ENCODE measurements at regions of chrX and their contacts with region 1.

Region 1: DNA sequence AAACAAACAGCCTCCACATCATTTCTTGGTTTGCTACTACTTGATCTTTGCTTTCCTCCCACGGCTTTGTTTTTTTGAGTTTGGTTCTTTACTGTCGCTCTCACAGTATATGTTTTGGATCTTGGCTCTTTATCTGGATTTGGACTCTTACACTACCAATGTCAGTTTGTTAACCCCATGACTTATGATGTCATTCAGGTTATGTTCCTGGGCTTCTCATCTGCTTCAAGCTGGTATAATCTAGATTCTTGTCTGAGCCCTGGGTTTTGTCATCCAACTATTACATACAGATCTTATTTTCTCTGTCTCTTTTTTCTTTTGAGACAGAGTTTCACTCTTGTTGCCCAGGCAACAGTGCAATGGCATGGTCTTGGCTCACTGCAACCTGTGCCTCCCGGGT is 482.9 kb upstream of the TEX13C start:
- DNase-seq: peak; percentile 3
- H3K4me3 Mint-ChIP-seq: peak overlapping the region; percentile 8
- H3K27ac Mint-ChIP-seq: no peak overlapping the region
- H3K4me1 Mint-ChIP-seq: peaks cover 5% of the 10 kb centered on the region
- H3K27me3 Mint-ChIP-seq: no peaks in the 10 kb centered on the region

Region 2: GRCh38 chrX:124435616-124436015 is 401.2 kb before region 1 on chrX:
- CTCF ChIA-PET with region 1: no interaction called
- intact Hi-C with region 1: no loop called
- DNase-seq: no peak
- H3K4me3 Mint-ChIP-seq: no peak overlapping the region
- H3K27ac Mint-ChIP-seq: no peak overlapping the region
- H3K4me1 Mint-ChIP-seq: no peaks in the 10 kb centered on the region
- H3K27me3 Mint-ChIP-seq: no peaks in the 10 kb centered on the region

Region 3: DNA sequence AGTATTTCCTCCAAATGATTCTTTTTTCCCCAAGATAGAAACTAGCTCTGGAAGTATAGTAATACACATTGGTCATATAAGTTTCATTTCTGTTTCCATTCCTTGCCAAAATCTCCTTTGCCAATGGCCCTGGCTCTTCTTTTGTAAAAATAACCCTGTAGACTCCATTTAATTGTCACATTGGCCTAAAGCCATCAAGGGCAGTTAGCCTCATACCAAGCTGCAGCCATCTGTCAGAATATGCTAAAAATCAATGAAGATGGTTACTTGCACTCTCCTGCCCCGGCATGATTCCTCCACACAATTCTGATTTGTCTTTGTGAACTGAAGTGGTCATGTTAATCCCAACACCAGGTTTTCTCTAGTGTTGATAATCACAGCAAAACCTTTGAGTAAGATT is 109.9 kb before region 1 on chrX:
- CTCF ChIA-PET with region 1: no interaction called
- intact Hi-C with region 1: loop called (anchors 5 kb)
- DNase-seq: no peak
- H3K4me3 Mint-ChIP-seq: no peak overlapping the region
- H3K27ac Mint-ChIP-seq: no peak overlapping the region
- H3K4me1 Mint-ChIP-seq: peaks cover 29% of the 10 kb centered on the region
- H3K27me3 Mint-ChIP-seq: no peaks in the 10 kb centered on the region

Region 4: GRCh38 chrX:124820738-124821137 is 16.0 kb before region 1 on chrX:
- CTCF ChIA-PET with region 1: no interaction called
- intact Hi-C with region 1: no loop called
- DNase-seq: no peak
- H3K4me3 Mint-ChIP-seq: no peak overlapping the region
- H3K27ac Mint-ChIP-seq: no peak overlapping the region
- H3K4me1 Mint-ChIP-seq: no peaks in the 10 kb centered on the region
- H3K27me3 Mint-ChIP-seq: no peaks in the 10 kb centered on the region

Region 5: GRCh38 chrX:125108926-125109325 is 272.1 kb after region 1 on chrX:
- CTCF ChIA-PET with region 1: no interaction called
- intact Hi-C with region 1: no loop called
- DNase-seq: no peak
- H3K4me3 Mint-ChIP-seq: no peak overlapping the region
- H3K27ac Mint-ChIP-seq: no peak overlapping the region
- H3K4me1 Mint-ChIP-seq: no peaks in the 10 kb centered on the region
- H3K27me3 Mint-ChIP-seq: peaks cover 2% of the 10 kb centered on the region

Measured in activated naive CD4-positive, alpha-beta T cell treated with anti-CD3 and anti-CD28 coated beads for 36 hours (primary cell).